Dendritic cell treated with granulocyte-macrophage colony-stimulating factor and Interleukin-4, amounts not matched to agents 40 ng/mL and 50 ng/mL, for 4 days (primary cell): ENCODE measurements at regions of chr9 and their contacts with region 1.

Region 1: GRCh38 chr9:128117613-128118471 is 9.7 kb downstream of the PTGES2 start:
- H3K4me3 Mint-ChIP-seq: no peak overlapping the region
- H3K27ac Mint-ChIP-seq: peak overlapping the region; percentile 27
- H3K4me1 Mint-ChIP-seq: peaks cover 40% of the 10 kb centered on the region
- H3K27me3 Mint-ChIP-seq: peaks cover 6% of the 10 kb centered on the region

Region 2: DNA sequence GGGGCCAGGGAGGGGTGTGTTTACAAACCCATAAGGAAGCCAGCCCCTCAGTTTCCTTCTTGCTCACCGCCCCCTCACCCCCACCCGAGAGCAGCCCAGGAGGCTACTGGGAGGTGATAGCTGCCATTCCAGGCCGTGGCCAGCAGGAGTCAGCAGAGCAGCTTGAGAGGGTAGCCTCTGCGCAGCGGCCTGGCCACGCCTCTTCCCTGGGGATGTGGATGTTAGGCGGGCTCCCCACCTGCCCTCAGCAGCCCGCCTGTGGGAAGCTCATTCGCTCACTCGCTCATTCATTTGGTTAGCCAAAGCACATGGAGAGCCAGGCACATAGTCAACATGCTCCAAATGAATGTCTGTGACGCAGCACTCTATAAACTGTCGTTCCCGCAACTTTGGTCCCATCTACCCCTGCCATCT is 174.1 kb before region 1 on chr9:
- intact Hi-C with region 1: loop called (anchors 2 kb)
- H3K4me3 Mint-ChIP-seq: no peak overlapping the region
- H3K27ac Mint-ChIP-seq: peak overlapping the region; percentile 50
- H3K4me1 Mint-ChIP-seq: peaks cover 32% of the 10 kb centered on the region
- H3K27me3 Mint-ChIP-seq: no peaks in the 10 kb centered on the region